ENCODE measurements at regions of chr9 and their contacts with region 1.

Region 1: GRCh38 chr9:123401879-123402513 is 46.0 kb downstream of the CRB2 start:
- DNase-seq: no peak
- ATAC-seq: no peak
- H3K4me3 Mint-ChIP-seq: no peak overlapping the region
- H3K27ac Mint-ChIP-seq: no peak overlapping the region
- H3K4me1 Mint-ChIP-seq: no peaks in the 10 kb centered on the region
- H3K27me3 Mint-ChIP-seq: no peaks in the 10 kb centered on the region
- CTCF ChIP-seq: no peak

Region 2: GRCh38 chr9:123353984-123354591 is 47.9 kb before region 1 on chr9:
- CTCF ChIA-PET with region 1: no interaction called
- POLR2A ChIA-PET with region 1: no interaction called
- intact Hi-C with region 1: no loop called
- DNase-seq: peak; percentile 58
- ATAC-seq: peak; percentile 79
- H3K4me3 Mint-ChIP-seq: no peak overlapping the region
- H3K27ac Mint-ChIP-seq: no peak overlapping the region
- H3K4me1 Mint-ChIP-seq: peaks cover 22% of the 10 kb centered on the region
- H3K27me3 Mint-ChIP-seq: no peaks in the 10 kb centered on the region
- CTCF ChIP-seq: peak; percentile 26

Region 3: GRCh38 chr9:124537926-124538325 is 1135.9 kb after region 1 on chr9:
- CTCF ChIA-PET with region 1: no interaction called
- POLR2A ChIA-PET with region 1: no interaction called
- intact Hi-C with region 1: loop called (anchors 2 kb)
- DNase-seq: no peak
- ATAC-seq: no peak
- H3K4me3 Mint-ChIP-seq: no peak overlapping the region
- H3K27ac Mint-ChIP-seq: no peak overlapping the region
- H3K4me1 Mint-ChIP-seq: no peaks in the 10 kb centered on the region
- H3K27me3 Mint-ChIP-seq: no peaks in the 10 kb centered on the region
- CTCF ChIP-seq: no peak